Adrenal gland (tissue), 19 donors: ENCODE measurements at regions of chr1 and their contacts with region 1.

Region 1: GRCh38 chr1:156860113-156860627 is 495 bp upstream of the NTRK1 start:
- DNase-seq: peak in 6 of 7 donors; percentile 30 to 63 (median 36)
- H3K4me3 ChIP-seq: peak overlapping the region in 1 of 4 donors; percentile 5
- H3K27ac ChIP-seq: peak overlapping the region in 1 of 5 donors; percentile 10
- H3K4me1 ChIP-seq: peaks cover 14 to 28% of the 10 kb centered on the region in 2 donors
- H3K27me3 ChIP-seq: peaks cover 34% of the 10 kb centered on the region
- CTCF ChIP-seq: peak; percentile 58 to 83 (median 74)
- POLR2A ChIP-seq: no peak

Region 2: DNA sequence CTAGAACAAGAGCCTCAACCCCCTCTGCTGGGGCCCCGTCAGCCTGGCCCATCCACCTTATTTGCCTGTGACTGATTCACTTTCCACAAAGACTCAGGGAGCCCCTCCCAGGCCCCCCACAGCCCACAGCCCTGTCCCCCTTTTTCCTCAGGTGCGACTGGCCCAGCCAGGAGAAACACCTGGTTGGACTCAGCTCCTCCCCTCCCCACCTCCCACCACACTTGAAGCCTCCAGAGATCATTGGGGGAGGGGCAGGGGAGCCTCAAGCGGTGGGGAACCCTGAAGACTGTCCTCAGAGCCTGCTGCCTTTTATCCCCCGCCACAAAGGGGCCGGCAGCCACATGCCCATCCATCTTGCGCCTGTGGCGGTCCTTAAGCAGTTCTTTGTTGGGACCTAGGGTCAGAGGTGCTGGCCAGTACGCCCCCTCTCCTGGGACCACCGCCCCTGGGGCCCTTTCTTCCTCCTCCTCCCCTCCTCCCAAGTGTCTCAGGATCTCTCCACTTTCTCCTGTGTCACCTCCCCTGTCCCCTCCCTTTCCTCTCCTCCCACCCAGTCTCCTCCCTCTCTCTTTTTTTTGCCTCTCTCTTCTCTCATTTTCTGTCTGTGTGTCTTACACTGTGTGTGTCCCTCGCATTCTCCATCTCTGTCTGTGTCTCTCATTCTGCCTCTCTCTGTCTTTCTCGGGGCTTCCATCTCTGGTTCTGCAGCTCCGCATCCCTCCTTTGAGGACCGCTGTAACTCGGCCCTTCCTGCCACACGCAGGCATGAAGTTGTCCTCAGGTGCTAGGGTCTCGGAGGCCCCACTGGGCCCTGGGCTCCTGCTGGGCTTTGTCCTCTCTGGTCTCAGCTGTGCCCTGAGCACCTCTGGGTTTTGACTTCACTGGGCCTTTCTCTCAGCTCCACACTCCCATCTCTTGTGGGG is 167.0 kb before region 1 on chr1:
- intact Hi-C with region 1: loop called in 1 of 2 experiments (anchors 10 kb)
- DNase-seq: no peak
- H3K4me3 ChIP-seq: no peak overlapping the region
- H3K27ac ChIP-seq: no peak overlapping the region
- H3K4me1 ChIP-seq: peaks cover 0 to 7% of the 10 kb centered on the region in 2 donors
- H3K27me3 ChIP-seq: peaks cover 10% of the 10 kb centered on the region
- CTCF ChIP-seq: no peak
- POLR2A ChIP-seq: no peak

Region 3: DNA sequence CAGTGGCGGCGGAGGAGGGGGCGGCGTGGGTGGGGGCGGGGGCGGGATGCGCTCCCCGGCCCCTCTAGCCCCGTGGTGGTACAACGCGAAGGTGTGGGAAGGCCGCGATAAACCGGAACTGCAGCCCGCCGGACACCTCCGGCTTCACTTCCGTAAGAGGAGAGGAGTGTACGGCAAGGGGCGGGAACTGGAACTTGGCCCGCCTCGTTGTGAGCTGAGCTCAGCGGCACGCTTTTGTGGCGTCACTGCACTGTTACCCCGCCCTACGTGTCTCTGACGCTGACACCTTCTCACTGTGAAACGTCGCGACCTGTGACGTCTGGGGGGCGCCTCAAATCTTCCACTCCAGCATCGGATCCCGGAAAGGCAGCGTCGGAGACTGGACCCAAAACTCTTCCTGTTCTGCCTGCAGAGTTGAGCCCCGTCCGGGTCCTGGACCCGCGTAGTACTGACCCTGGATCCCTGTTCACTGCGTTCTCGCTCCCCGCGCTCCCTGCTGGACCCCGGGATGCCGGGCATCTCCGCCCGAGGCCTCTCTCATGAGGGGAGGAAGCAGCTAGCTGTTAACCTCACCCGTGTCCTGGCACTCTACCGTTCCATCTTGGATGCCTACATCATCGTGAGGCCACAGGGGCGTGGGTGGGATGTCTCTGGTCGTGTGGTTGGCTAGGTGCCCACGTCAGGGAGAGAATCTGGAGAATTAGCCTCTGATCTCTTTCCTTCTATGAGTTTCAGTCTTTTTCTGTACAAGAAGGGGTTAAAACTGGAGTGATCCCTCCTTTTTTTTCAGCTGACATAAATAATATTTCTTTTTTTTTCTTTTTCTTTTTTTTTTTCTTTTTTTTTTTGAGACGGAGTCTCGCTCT is 131.3 kb before region 1 on chr1 and contains the start of gene ISG20L2:
- intact Hi-C with region 1: loop called in 1 of 2 experiments (anchors 10 kb)
- DNase-seq: peak; percentile 95 to 99 (median 98)
- H3K4me3 ChIP-seq: peak within 1 kb of the TSS; percentile 81 to 96 (median 93)
- H3K27ac ChIP-seq: peak within 1 kb of the TSS; percentile 84 to 98 (median 90)
- H3K4me1 ChIP-seq: peaks cover 31 to 42% of the 10 kb centered on the region in 2 donors
- H3K27me3 ChIP-seq: no peaks in the 10 kb centered on the region
- CTCF ChIP-seq: peak in 2 of 6 experiments; percentile 3 to 10
- POLR2A ChIP-seq: peak; percentile 61 to 77
- total RNA-seq, gene ISG20L2: 10.6 to 38.5 (median 19.3) TPM